ENCODE measurements at regions of chr6 and their contacts with region 1.

Region 1: DNA sequence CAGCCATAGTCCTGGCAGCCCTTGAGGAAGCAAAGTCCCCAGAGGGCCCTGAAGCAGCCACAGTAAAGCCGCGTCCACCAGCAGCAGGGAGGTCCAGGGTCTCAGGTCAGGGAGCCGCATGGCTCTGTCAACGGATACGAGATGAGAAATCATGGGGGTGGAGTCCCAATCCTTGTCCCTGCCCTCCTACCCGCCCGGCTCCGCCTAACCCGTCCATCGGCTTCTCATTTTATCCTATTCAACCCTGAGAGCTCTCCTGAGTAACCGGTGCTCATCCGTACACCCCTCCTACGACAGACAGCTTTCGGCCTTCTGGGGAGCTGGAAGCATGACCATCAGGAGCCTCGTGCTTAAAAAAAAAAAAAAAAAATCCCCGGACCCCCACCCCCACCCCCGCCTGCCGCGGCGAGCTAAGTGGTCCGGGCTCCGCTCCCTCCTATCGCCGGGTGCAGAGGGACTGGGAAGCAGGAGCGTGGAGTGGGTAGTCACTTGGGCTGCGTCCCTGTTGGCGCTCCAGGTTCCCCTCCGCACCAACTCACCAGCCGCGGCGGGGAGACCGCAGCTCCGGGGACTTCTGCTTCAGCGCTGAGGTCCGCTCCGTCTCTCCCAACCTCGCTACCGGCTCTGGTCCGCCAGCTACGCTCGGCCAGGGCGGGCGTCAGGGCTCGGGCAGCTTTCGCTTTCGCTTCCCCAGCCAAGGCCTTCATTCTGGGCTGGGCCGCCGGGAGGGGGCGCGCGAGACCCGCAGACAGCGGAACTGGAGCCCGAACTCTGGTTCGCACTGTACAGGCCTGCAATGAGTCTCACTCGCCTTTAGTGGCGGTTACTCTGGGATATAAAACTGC is at the start of gene TAP2:
- DNase-seq: peak; percentile 90 to 99 (median 97)
- ATAC-seq: peak; percentile 92 to 93 (median 92)
- H3K4me3 ChIP-seq: peak within 1 kb of the TSS; percentile 82 to 89
- H3K4me3 Mint-ChIP-seq: peak within 1 kb of the TSS; percentile 72 to 92 (median 84)
- H3K27ac ChIP-seq: peak within 1 kb of the TSS; percentile 100
- H3K27ac Mint-ChIP-seq: peak within 1 kb of the TSS; percentile 100
- H3K4me1 ChIP-seq: peaks cover 38 to 67% of the 10 kb centered on the region in 2 experiments
- H3K4me1 Mint-ChIP-seq: peaks cover 68 to 90% (median 88%) of the 10 kb centered on the region in 3 donors
- H3K27me3 ChIP-seq: no peaks in the 10 kb centered on the region
- H3K27me3 Mint-ChIP-seq: no peaks in the 10 kb centered on the region
- total RNA-seq, gene TAP2: 116 to 147 (median 140) TPM

Region 2: GRCh38 chr6:32825966-32826365 is 12.4 kb before region 1 on chr6:
- CTCF ChIA-PET with region 1: interaction called in 1 of 2 experiments, 20 read pairs
- POLR2A ChIA-PET with region 1: no interaction called
- DNase-seq: peak in 1 of 35 experiments; percentile 33
- ATAC-seq: no peak
- H3K4me3 ChIP-seq: no peak overlapping the region
- H3K4me3 Mint-ChIP-seq: no peak overlapping the region
- H3K27ac ChIP-seq: no peak overlapping the region
- H3K27ac Mint-ChIP-seq: no peak overlapping the region
- H3K4me1 ChIP-seq: no peaks in the 10 kb centered on the region
- H3K4me1 Mint-ChIP-seq: peaks cover 4 to 8% (median 6%) of the 10 kb centered on the region in 3 donors
- H3K27me3 ChIP-seq: no peaks in the 10 kb centered on the region
- H3K27me3 Mint-ChIP-seq: no peaks in the 10 kb centered on the region

Region 3: DNA sequence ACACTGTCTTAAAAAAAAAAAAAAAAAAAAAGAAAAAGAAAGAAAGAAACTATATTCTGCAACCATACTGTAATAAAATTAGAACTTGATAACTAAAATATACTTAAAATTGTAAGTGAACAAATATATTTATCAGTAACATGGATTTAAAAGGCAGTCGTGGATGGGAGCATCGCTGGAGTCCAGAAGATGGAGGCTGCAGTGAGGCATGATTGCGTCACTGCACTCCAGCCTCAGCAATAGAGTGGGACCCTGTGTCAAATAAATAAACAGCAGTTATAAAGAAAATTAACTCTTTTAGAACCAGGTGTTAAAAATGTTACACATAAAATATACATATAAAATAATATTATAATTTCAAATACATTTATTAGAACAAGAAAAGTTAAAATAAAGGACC is 24.4 kb after region 1 on chr6:
- CTCF ChIA-PET with region 1: interaction called, 29 to 236 read pairs
- POLR2A ChIA-PET with region 1: interaction called, 7 to 29 read pairs
- DNase-seq: no peak
- ATAC-seq: no peak
- H3K4me3 ChIP-seq: no peak overlapping the region
- H3K4me3 Mint-ChIP-seq: no peak overlapping the region
- H3K27ac ChIP-seq: no peak overlapping the region
- H3K27ac Mint-ChIP-seq: peak overlapping the region in 1 of 2 donors; percentile 21
- H3K4me1 ChIP-seq: peaks cover 11 to 29% of the 10 kb centered on the region in 2 experiments
- H3K4me1 Mint-ChIP-seq: peaks cover 45 to 56% (median 51%) of the 10 kb centered on the region in 3 donors
- H3K27me3 ChIP-seq: no peaks in the 10 kb centered on the region
- H3K27me3 Mint-ChIP-seq: no peaks in the 10 kb centered on the region

Region 4: GRCh38 chr6:32885698-32886286 is 47.5 kb after region 1 on chr6:
- CTCF ChIA-PET with region 1: interaction called in 1 of 2 experiments, 6 read pairs
- POLR2A ChIA-PET with region 1: interaction called in 1 of 2 experiments, 12 read pairs
- DNase-seq: peak in 1 of 35 experiments; percentile 86
- ATAC-seq: peak; percentile 34 to 70 (median 64)
- H3K4me3 ChIP-seq: no peak overlapping the region
- H3K4me3 Mint-ChIP-seq: no peak overlapping the region
- H3K27ac ChIP-seq: no peak overlapping the region
- H3K27ac Mint-ChIP-seq: no peak overlapping the region
- H3K4me1 ChIP-seq: no peaks in the 10 kb centered on the region
- H3K4me1 Mint-ChIP-seq: peaks cover 0 to 4% (median 0%) of the 10 kb centered on the region in 3 donors
- H3K27me3 ChIP-seq: no peaks in the 10 kb centered on the region
- H3K27me3 Mint-ChIP-seq: no peaks in the 10 kb centered on the region

Region 5: DNA sequence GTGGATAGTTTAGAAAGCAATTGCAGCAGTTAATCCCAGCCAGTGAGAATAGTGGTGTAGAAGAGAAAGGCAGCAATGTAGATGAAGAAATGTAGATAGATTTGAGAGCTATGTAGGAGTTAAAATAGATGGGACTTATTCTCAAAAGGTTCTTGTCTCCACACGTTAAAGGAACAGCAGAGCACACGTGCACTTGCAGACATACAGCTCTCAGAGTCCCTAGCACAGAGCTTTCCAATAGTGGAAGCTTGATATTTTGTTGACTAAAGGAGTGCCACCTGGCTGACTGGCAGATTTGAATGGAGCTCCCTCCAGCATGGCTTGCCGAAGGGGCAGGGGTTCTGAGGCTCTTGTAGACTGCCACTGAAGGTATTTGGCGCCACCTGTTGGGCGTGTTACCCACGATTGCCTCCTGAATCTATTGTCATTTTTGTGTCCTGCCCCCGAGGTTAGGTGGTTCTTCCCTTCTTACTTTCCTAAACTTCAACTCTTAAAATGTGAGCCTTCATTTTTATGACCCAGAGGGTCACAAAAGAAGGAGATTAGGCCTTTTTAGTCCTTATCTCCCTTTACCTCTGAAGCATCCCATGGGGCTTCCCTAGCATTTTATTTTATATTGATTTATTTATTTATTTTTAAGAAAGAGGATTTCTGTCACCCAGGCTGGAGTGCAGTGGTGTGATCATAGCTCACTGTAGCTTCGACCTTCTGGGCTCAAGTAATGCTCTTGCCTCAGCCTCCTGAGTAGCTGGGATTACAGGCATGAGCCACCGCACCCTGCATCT is 146.5 kb after region 1 on chr6:
- CTCF ChIA-PET with region 1: interaction called in 1 of 2 experiments, 17 read pairs
- POLR2A ChIA-PET with region 1: interaction called in 1 of 2 experiments, 4 read pairs
- DNase-seq: peak; percentile 70 to 95 (median 88)
- ATAC-seq: peak; percentile 76 to 88 (median 86)
- H3K4me3 ChIP-seq: no peak overlapping the region
- H3K4me3 Mint-ChIP-seq: no peak overlapping the region
- H3K27ac ChIP-seq: no peak overlapping the region
- H3K27ac Mint-ChIP-seq: peak overlapping the region; percentile 50 to 83
- H3K4me1 ChIP-seq: peaks cover 0 to 9% of the 10 kb centered on the region in 2 experiments
- H3K4me1 Mint-ChIP-seq: peaks cover 23 to 35% (median 26%) of the 10 kb centered on the region in 3 donors
- H3K27me3 ChIP-seq: no peaks in the 10 kb centered on the region
- H3K27me3 Mint-ChIP-seq: no peaks in the 10 kb centered on the region

Region 6: GRCh38 chr6:33183071-33183683 is 344.8 kb after region 1 on chr6:
- CTCF ChIA-PET with region 1: no interaction called
- POLR2A ChIA-PET with region 1: no interaction called
- DNase-seq: peak in 1 of 35 experiments; percentile 31
- ATAC-seq: peak in 2 of 4 experiments; percentile 50 to 60
- H3K4me3 ChIP-seq: no peak overlapping the region
- H3K4me3 Mint-ChIP-seq: peak overlapping the region; percentile 31 to 60 (median 31)
- H3K27ac ChIP-seq: peak overlapping the region; percentile 45
- H3K27ac Mint-ChIP-seq: peak overlapping the region; percentile 94
- H3K4me1 ChIP-seq: peaks cover 8 to 23% of the 10 kb centered on the region in 2 experiments
- H3K4me1 Mint-ChIP-seq: peaks cover 24 to 25% (median 25%) of the 10 kb centered on the region in 3 donors
- H3K27me3 ChIP-seq: peaks cover 0 to 24% of the 10 kb centered on the region in 2 experiments
- H3K27me3 Mint-ChIP-seq: peaks cover 10 to 23% of the 10 kb centered on the region in 2 donors

Measured in T-cell (primary cell).